Stomach (tissue), 19 donors: ENCODE measurements at regions of chr16 and their contacts with region 1.

Region 1: GRCh38 chr16:4506450-4506849 is 30.3 kb downstream of the HMOX2 start:
- DNase-seq: peak; percentile 65 to 91
- H3K4me3 ChIP-seq: no peak overlapping the region
- H3K27ac ChIP-seq: peak overlapping the region in 4 of 5 donors; percentile 63 to 81 (median 76)
- H3K4me1 ChIP-seq: peaks cover 38 to 72% (median 55%) of the 10 kb centered on the region in 4 donors
- H3K27me3 ChIP-seq: no peaks in the 10 kb centered on the region
- CTCF ChIP-seq: peak in 5 of 7 experiments; percentile 57 to 81 (median 73)
- EP300 ChIP-seq: no peak
- POLR2A ChIP-seq: no peak

Region 2: GRCh38 chr16:4350787-4351659 is 155.4 kb before region 1 on chr16 and contains the start of gene PAM16:
- intact Hi-C with region 1: no loop called
- DNase-seq: peak; percentile 98 to 99
- H3K4me3 ChIP-seq: peak within 1 kb of the TSS; percentile 81 to 97 (median 86)
- H3K27ac ChIP-seq: peak within 1 kb of the TSS; percentile 77 to 96 (median 85)
- H3K4me1 ChIP-seq: peaks cover 20 to 54% (median 51%) of the 10 kb centered on the region in 4 donors
- H3K27me3 ChIP-seq: no peaks in the 10 kb centered on the region
- CTCF ChIP-seq: peak in 1 of 7 experiments; percentile 18
- EP300 ChIP-seq: no peak
- POLR2A ChIP-seq: no peak
- total RNA-seq, gene PAM16: 4.7 to 218 (median 28.1) TPM

Region 3: DNA sequence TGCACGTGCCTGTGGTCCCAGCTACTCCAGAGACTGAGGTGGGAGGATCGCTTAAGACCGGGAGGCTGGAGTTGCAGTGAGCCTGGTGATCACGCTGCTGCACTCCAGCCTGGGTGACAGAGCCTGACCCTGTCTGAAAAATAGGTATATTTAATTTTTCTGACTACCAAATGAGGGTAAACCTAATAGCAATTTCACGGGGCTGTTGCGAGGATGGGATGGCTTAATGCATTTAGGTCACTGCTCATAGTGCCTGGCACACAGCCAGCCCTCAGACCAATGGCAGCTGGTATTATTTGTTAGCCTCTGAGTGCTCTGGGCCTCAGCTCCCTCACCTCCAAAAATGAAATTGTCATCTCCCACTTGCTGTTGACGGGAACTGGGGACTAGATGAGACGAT is 38.0 kb after region 1 on chr16:
- intact Hi-C with region 1: loop called (anchors 5 kb)
- DNase-seq: peak in 1 of 2 donors; percentile 46
- H3K4me3 ChIP-seq: no peak overlapping the region
- H3K27ac ChIP-seq: no peak overlapping the region
- H3K4me1 ChIP-seq: peaks cover 0 to 13% (median 7%) of the 10 kb centered on the region in 4 donors
- H3K27me3 ChIP-seq: no peaks in the 10 kb centered on the region
- CTCF ChIP-seq: no peak
- EP300 ChIP-seq: no peak
- POLR2A ChIP-seq: no peak

Region 4: GRCh38 chr16:4625560-4626159 is 119.2 kb after region 1 on chr16:
- intact Hi-C with region 1: no loop called
- DNase-seq: no peak
- H3K4me3 ChIP-seq: peak overlapping the region; percentile 65 to 100 (median 93)
- H3K27ac ChIP-seq: peak overlapping the region; percentile 94 to 99 (median 97)
- H3K4me1 ChIP-seq: peaks cover 22 to 49% (median 33%) of the 10 kb centered on the region in 4 donors
- H3K27me3 ChIP-seq: no peaks in the 10 kb centered on the region
- CTCF ChIP-seq: no peak
- EP300 ChIP-seq: no peak
- POLR2A ChIP-seq: no peak